ENCODE measurements at regions of chr17 and their contacts with region 1.

Region 1: GRCh38 chr17:19338031-19338990 is 24.2 kb downstream of the B9D1 start:
- DNase-seq: peak; percentile 84 to 86
- H3K4me3 ChIP-seq: no peak overlapping the region
- H3K4me3 Mint-ChIP-seq: no peak overlapping the region
- H3K27ac Mint-ChIP-seq: no peak overlapping the region
- H3K4me1 ChIP-seq: peaks cover 28% of the 10 kb centered on the region
- H3K4me1 Mint-ChIP-seq: peaks cover 19% of the 10 kb centered on the region
- H3K27me3 ChIP-seq: no peaks in the 10 kb centered on the region
- H3K27me3 Mint-ChIP-seq: no peaks in the 10 kb centered on the region
- CTCF ChIP-seq: peak; percentile 61 to 68

Region 2: DNA sequence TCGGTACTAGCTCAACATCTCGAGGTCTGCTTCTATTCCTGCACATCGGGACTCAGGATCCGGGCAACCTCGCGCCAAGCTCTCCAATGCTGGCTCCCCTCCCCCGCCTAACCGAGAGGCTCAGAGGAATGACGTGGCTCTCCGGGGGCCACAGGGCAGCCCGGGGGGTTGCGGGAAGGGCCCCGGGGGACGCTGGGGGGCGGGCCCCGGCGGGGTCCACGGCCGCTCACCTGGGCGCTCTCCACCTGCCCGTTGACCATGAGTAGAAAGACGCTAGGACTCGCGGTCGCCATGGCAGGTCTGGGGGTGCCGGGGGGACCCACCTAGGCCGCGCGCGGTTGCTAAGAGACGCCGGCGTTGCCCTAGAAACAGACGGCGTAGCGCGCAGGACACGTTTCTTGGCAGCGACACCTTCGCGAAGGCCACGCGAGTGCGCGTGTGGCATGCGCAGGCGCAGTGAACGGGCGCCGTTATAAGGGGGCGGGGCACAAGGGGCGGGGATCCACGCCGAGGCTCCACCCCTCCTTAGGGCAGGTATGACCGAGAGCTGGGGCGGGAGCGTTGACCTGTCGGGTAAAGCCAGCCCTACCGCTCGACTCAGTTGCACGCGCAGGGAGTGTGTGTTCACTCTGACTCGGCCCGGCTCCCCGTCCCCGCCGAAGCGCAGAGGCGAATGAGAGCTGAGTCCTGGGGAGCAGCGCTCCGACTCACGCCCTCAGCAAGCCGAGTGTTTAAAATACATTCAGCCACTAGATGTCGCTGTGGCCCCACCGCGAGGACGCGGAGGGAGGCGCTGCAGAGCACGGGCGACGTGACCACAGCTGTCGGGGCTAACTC is 24.2 kb after region 1 on chr17 and contains the start of gene B9D1:
- CTCF ChIA-PET with region 1: interaction called, 11 read pairs
- POLR2A ChIA-PET with region 1: interaction called, 3 read pairs
- intact Hi-C with region 1: no loop called
- DNase-seq: peak; percentile 93 to 94
- H3K4me3 ChIP-seq: peak within 1 kb of the TSS; percentile 81
- H3K4me3 Mint-ChIP-seq: peak within 1 kb of the TSS; percentile 80
- H3K27ac Mint-ChIP-seq: peak within 1 kb of the TSS; percentile 68
- H3K4me1 ChIP-seq: peaks cover 6% of the 10 kb centered on the region
- H3K4me1 Mint-ChIP-seq: no peaks in the 10 kb centered on the region
- H3K27me3 ChIP-seq: no peaks in the 10 kb centered on the region
- H3K27me3 Mint-ChIP-seq: no peaks in the 10 kb centered on the region
- CTCF ChIP-seq: peak; percentile 94 to 98
- total RNA-seq, gene B9D1: 8.1 and 11.5 TPM in 2 replicates

Measured in Caco-2 (cell line).